HCT116 (cell line): ENCODE measurements at regions of chrX and their contacts with region 1.

Region 1: DNA sequence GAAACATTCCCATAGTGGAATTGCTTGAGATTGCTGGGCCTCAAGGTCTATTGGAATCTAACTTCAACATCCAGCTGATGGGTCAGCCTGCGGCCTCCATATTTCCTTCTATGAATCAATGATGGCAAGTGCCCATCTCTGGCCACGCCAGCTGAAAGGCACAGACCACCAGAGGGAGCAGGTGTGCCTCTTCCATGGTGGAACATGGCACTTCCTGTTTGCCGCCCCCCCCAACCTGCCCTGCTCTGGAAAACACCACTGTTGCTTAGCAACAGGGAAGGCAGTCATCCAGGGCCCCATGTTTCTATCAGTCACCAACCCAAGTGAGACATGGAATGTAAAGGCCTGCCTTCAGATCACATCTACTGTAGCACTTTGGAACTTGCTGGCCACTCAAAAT is 11.6 kb downstream of the PAGE4 start:
- DNase-seq: peak; percentile 57
- ATAC-seq: peak; percentile 82
- H3K4me3 ChIP-seq: no peak overlapping the region
- H3K27ac ChIP-seq: no peak overlapping the region
- H3K4me1 ChIP-seq: no peaks in the 10 kb centered on the region
- H3K27me3 ChIP-seq: no peaks in the 10 kb centered on the region
- CTCF ChIP-seq: peak; percentile 53 to 73 (median 58); a peak in 5 of 6 replicates
- POLR2A ChIP-seq: no peak
- RAD21 ChIP-seq: peak; percentile 54

Region 2: DNA sequence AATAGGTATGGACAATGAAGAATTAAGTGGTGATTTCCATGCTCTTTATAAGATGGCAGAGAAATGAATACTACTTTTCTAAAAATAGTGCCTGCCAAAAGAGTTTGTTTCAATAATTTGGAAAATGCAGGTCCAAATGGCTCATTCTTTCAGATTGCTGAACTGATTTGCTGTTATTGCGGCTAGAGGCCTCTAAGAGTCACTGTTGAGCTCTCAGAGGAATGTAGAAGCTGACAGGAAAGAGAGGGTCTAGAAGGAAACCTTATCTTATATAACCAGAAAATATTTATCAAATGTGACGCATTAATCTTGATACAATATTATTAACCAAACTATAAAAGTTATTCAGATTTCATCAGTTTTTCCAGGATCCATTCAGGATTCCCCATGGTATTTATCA is 79.2 kb before region 1 on chrX:
- CTCF ChIA-PET with region 1: interaction called, 5 read pairs
- POLR2A ChIA-PET with region 1: no interaction called
- RAD21 ChIA-PET with region 1: no interaction called
- intact Hi-C with region 1: loop called (anchors 5 kb)
- DNase-seq: no peak
- ATAC-seq: peak; percentile 76
- H3K4me3 ChIP-seq: no peak overlapping the region
- H3K27ac ChIP-seq: no peak overlapping the region
- H3K4me1 ChIP-seq: no peaks in the 10 kb centered on the region
- H3K27me3 ChIP-seq: peaks cover 22% of the 10 kb centered on the region
- CTCF ChIP-seq: peak in 2 of 3 experiments; percentile 41 to 42; a peak in 4 of 6 replicates
- POLR2A ChIP-seq: no peak
- RAD21 ChIP-seq: peak; percentile 35; the same call in 1 of the 2 replicates

Region 3: GRCh38 chrX:49922291-49923241 is 81.9 kb after region 1 on chrX and contains the start of gene CLCN5:
- CTCF ChIA-PET with region 1: interaction called, 3 read pairs
- POLR2A ChIA-PET with region 1: no interaction called
- RAD21 ChIA-PET with region 1: no interaction called
- intact Hi-C with region 1: loop called (anchors 5 kb)
- DNase-seq: peak; percentile 85
- ATAC-seq: peak; percentile 96
- H3K4me3 ChIP-seq: peak within 1 kb of the TSS; percentile 57 to 65
- H3K27ac ChIP-seq: peak within 1 kb of the TSS; percentile 27; the same call in 1 of the 2 replicates
- H3K4me1 ChIP-seq: peaks cover 0 to 13% of the 10 kb centered on the region in 2 experiments; a peak in 2 of 4 replicates
- H3K27me3 ChIP-seq: no peaks in the 10 kb centered on the region
- CTCF ChIP-seq: no peak
- POLR2A ChIP-seq: no peak
- RAD21 ChIP-seq: no peak
- total RNA-seq, gene CLCN5: 6.1 TPM

Region 4: GRCh38 chrX:50111742-50112141 is 271.1 kb after region 1 on chrX:
- CTCF ChIA-PET with region 1: no interaction called
- POLR2A ChIA-PET with region 1: no interaction called
- RAD21 ChIA-PET with region 1: no interaction called
- intact Hi-C with region 1: no loop called
- DNase-seq: no peak
- ATAC-seq: no peak
- H3K4me3 ChIP-seq: no peak overlapping the region
- H3K27ac ChIP-seq: no peak overlapping the region
- H3K4me1 ChIP-seq: no peaks in the 10 kb centered on the region
- H3K27me3 ChIP-seq: no peaks in the 10 kb centered on the region
- CTCF ChIP-seq: no peak
- POLR2A ChIP-seq: no peak
- RAD21 ChIP-seq: no peak